ENCODE measurements at regions of chr1 and their contacts with region 1.

Region 1: GRCh38 chr1:904310-904950 is 19.3 kb upstream of the SAMD11 start:
- DNase-seq: peak in 1 of 2 donors; percentile 56
- ATAC-seq: peak; percentile 82 to 88
- H3K4me3 ChIP-seq: peak overlapping the region; percentile 36 to 57 (median 48)
- H3K27ac ChIP-seq: peak overlapping the region in 1 of 4 donors; percentile 48
- H3K4me1 ChIP-seq: peaks cover 0 to 4% of the 10 kb centered on the region in 2 donors
- H3K27me3 ChIP-seq: peaks cover 11 to 30% (median 19%) of the 10 kb centered on the region in 3 donors
- CTCF ChIP-seq: peak; percentile 73 to 94 (median 91)
- POLR2A ChIP-seq: no peak

Region 2: GRCh38 chr1:921011-921837 is 16.8 kb after region 1 on chr1:
- in situ Hi-C with region 1: no loop called
- intact Hi-C with region 1: loop called (anchors 1 kb)
- DNase-seq: peak in 1 of 2 donors; percentile 51
- ATAC-seq: peak; percentile 59 to 60
- H3K4me3 ChIP-seq: peak overlapping the region in 1 of 4 donors; percentile 7
- H3K27ac ChIP-seq: no peak overlapping the region
- H3K4me1 ChIP-seq: peaks cover 15 to 32% of the 10 kb centered on the region in 2 donors
- H3K27me3 ChIP-seq: peaks cover 16 to 52% (median 25%) of the 10 kb centered on the region in 3 donors
- CTCF ChIP-seq: peak; percentile 34 to 74 (median 55)
- POLR2A ChIP-seq: no peak

Region 3: DNA sequence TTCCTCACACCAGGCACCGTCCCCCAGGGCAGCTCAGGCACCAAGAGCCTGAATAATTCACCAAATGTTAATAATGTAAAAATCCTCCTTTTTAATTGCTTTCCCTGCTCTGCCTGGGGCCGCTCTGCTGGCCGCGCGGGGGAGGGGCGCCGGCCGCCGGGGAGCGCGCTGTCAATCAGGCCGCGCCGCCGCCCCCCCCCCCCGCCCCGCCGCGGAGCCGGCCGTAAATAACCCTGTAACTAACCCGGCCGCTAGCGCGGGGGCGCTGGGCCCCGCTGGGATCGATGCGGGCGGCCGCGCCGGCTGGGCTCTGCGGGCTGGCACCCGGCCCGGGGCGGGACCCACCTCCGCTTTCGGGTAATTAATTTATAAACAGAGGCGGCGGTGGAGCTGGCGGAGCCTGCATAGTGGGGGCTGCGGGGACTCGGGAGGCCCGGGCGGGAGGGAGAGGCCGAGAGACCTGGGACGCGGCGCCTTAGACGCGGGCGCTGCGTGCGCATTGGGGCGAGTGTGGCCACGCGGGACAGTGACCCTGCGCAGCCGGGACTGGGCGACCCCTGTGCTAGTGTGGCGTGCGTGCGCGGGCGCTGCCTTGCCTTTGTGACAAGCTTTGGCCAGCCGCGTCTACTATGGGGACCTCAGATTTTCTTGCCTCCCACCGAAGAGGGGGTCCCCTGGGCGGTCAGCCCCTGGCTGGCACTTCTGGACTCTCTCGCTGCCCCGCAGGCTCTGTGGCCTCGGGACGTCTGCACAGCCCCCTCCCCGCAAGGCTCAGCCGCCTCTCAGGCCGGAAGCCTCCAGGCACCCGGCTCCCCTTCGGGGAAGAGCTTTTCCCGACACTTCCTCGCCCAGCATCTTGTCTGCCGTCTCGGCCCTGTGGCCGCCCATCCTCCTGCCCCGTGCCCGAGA is 35.9 kb after region 1 on chr1:
- in situ Hi-C with region 1: no loop called
- intact Hi-C with region 1: loop called (anchors 1 kb)
- DNase-seq: no peak
- ATAC-seq: peak; percentile 15 to 72
- H3K4me3 ChIP-seq: peak overlapping the region; percentile 34 to 68 (median 50)
- H3K27ac ChIP-seq: no peak overlapping the region
- H3K4me1 ChIP-seq: peaks cover 12 to 24% of the 10 kb centered on the region in 2 donors
- H3K27me3 ChIP-seq: peaks cover 56 to 69% (median 67%) of the 10 kb centered on the region in 3 donors
- CTCF ChIP-seq: peak in 1 of 5 experiments; percentile 17
- POLR2A ChIP-seq: no peak

Region 4: GRCh38 chr1:958823-959729 is 54.6 kb after region 1 on chr1 and contains the start of gene NOC2L:
- in situ Hi-C with region 1: no loop called
- intact Hi-C with region 1: loop called (anchors 5 kb)
- DNase-seq: peak; percentile 86 to 90
- ATAC-seq: peak; percentile 85 to 87
- H3K4me3 ChIP-seq: peak within 1 kb of the TSS; percentile 83 to 94 (median 92)
- H3K27ac ChIP-seq: peak within 1 kb of the TSS; percentile 69 to 86 (median 78)
- H3K4me1 ChIP-seq: peaks cover 13 to 24% of the 10 kb centered on the region in 2 donors
- H3K27me3 ChIP-seq: no peaks in the 10 kb centered on the region
- CTCF ChIP-seq: no peak
- POLR2A ChIP-seq: peak; percentile 33 to 69
- total RNA-seq, gene NOC2L: 47.4 to 115 (median 74.2) TPM

Region 5: DNA sequence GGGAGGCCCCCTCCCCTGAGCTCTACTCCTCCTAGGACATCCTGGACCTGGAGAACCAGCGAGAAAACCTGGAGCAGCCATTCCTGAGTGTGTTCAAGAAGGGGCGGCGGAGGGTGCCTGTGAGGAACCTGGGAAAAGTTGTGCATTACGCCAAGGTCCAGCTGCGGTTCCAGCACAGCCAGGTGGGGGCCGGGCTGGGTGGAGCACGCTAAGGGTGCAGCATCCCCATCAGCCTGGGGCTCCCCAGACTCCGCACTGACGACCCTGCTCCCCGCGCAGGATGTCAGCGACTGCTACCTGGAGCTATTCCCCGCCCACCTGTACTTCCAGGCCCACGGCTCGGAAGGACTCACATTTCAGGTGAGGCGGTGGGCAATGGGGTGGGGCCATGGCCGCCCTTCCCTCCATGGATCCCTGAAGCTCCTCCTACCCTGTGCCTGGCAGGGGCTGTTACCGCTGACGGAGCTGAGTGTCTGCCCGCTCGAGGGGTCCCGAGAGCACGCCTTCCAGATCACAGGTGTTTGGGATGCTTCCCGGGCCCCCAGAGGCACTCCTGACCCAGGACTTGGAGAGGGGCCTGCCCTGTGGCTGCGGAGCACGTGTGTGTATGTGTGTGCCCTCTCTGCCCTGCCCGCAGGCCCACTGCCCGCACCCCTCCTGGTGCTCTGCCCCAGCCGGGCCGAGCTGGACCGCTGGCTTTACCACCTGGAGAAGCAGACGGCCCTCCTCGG is 66.0 kb after region 1 on chr1:
- in situ Hi-C with region 1: no loop called
- intact Hi-C with region 1: no loop called
- DNase-seq: peak in 1 of 2 donors; percentile 46
- ATAC-seq: no peak
- H3K4me3 ChIP-seq: no peak overlapping the region
- H3K27ac ChIP-seq: no peak overlapping the region
- H3K4me1 ChIP-seq: peaks cover 5 to 30% of the 10 kb centered on the region in 2 donors
- H3K27me3 ChIP-seq: peaks cover 8 to 37% (median 23%) of the 10 kb centered on the region in 3 donors
- CTCF ChIP-seq: no peak
- POLR2A ChIP-seq: no peak

Measured in gastrocnemius medialis (tissue), 4 donors.